Psoas muscle (tissue), 8 donors: ENCODE measurements at regions of chr21 and their contacts with region 1.

Region 1: GRCh38 chr21:42467140-42467983 is 28.7 kb downstream of the RSPH1 start:
- DNase-seq: peak in 1 of 2 donors; percentile 47
- ATAC-seq: peak; percentile 80 to 87 (median 84)
- H3K4me3 ChIP-seq: peak overlapping the region; percentile 35
- H3K27ac ChIP-seq: peak overlapping the region; percentile 59
- H3K4me1 ChIP-seq: peaks cover 3% of the 10 kb centered on the region
- H3K27me3 ChIP-seq: no peaks in the 10 kb centered on the region
- CTCF ChIP-seq: peak; percentile 34

Region 2: DNA sequence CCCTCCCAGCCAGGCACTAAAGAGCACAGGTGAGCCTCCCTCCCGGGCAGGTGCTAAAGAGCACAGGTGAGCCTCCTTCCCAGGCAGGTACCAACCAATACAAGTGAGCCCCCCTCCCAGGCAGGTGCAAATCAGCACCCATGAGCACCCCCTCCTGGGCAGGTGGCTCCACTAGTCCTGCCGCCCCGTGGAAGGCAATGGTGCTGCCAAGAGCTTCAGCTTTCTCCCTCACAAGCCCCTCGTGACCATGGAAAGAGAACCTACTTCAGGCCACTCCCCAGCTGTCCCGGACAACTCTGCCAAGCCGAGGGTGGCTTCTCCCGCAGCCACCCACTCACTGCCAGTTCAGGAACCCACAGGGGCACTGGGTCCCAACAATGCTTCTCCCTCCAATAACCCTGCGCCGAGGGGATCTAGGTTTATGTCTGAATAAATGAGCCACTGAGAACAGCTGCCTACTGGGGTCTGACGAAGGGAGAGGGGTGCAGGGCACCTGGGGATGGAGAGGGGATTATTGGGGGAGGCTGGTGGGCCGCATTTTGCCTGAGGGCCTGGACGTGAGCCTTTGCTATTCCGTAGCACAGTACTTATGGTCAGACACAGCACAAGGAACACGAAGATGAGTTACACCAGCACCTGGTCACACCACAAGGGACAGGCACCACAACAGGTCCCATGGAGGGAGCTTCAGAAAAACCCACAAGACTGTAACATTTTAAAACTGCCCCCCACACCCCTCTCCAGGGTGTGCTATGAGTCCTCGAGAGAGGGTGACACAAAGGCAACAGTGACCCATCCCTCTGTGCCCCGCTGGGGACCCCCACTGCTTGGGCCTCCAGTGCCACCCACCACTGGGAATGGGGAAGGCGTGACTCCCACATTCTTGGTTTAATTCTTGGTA is 634.5 kb before region 1 on chr21:
- intact Hi-C with region 1: no loop called
- DNase-seq: no peak
- ATAC-seq: no peak
- H3K4me3 ChIP-seq: no peak overlapping the region
- H3K27ac ChIP-seq: no peak overlapping the region
- H3K4me1 ChIP-seq: no peaks in the 10 kb centered on the region
- H3K27me3 ChIP-seq: no peaks in the 10 kb centered on the region
- CTCF ChIP-seq: no peak

Region 3: DNA sequence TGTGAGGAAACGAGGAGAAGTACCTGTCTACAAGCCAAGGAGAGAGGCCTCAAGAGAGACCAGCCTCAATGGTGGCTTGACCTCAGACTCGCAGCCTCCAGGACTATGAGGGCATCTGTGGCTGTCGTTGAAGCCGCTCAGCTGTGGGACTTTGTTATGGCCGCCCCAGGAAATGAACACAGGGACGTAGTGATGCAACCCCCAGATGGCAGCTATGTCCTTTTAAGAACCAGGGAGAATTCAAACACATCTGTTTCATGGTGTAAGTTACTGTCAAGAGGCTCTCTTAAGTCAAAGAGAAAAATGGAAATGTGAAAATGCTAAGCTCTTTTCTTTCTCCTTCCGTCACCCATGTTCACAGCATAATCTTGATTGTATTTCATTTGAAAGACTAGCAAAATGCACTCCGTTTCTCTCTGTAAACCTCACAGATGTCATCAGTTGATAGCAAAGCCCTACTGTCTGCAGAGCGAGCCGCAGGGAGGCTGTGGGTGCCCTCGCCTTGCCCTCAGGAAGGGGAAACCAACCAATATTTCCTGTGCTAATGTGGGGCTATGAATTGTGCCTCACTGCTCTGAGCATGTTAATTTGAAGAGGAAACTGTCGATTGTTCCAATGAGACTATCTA is 42.3 kb before region 1 on chr21:
- intact Hi-C with region 1: no loop called
- DNase-seq: no peak
- ATAC-seq: no peak
- H3K4me3 ChIP-seq: no peak overlapping the region
- H3K27ac ChIP-seq: no peak overlapping the region
- H3K4me1 ChIP-seq: no peaks in the 10 kb centered on the region
- H3K27me3 ChIP-seq: peaks cover 0 to 48% (median 4%) of the 10 kb centered on the region in 3 donors
- CTCF ChIP-seq: no peak

Region 4: GRCh38 chr21:42513985-42514882 is 46.9 kb after region 1 on chr21:
- intact Hi-C with region 1: loop called in 1 of 2 experiments (anchors 5 kb)
- DNase-seq: peak; percentile 46 to 70
- ATAC-seq: peak; percentile 68 to 86 (median 80)
- H3K4me3 ChIP-seq: peak overlapping the region; percentile 95
- H3K27ac ChIP-seq: peak overlapping the region; percentile 88
- H3K4me1 ChIP-seq: peaks cover 12% of the 10 kb centered on the region
- H3K27me3 ChIP-seq: no peaks in the 10 kb centered on the region
- CTCF ChIP-seq: no peak